Heart left ventricle (tissue), 16 donors: ENCODE measurements at regions of chr4 and their contacts with region 1.

Region 1: GRCh38 chr4:163332500-163333406 is at the start of gene NPY1R:
- DNase-seq: peak; percentile 43 to 70 (median 62)
- ATAC-seq: peak; percentile 80 to 96 (median 94)
- H3K4me3 ChIP-seq: peak within 1 kb of the TSS; percentile 27 to 73 (median 53)
- H3K27ac ChIP-seq: peak within 1 kb of the TSS in 2 of 12 donors; percentile 17 to 26
- H3K4me1 ChIP-seq: peaks cover 0 to 11% (median 0%) of the 10 kb centered on the region in 12 donors
- H3K27me3 ChIP-seq: peaks cover 4 to 45% (median 12%) of the 10 kb centered on the region in 9 donors
- CTCF ChIP-seq: peak; percentile 38 to 68 (median 62)
- POLR2A ChIP-seq: no peak
- total RNA-seq, gene NPY1R: 0.19 to 2.5 (median 0.56) TPM

Region 2: DNA sequence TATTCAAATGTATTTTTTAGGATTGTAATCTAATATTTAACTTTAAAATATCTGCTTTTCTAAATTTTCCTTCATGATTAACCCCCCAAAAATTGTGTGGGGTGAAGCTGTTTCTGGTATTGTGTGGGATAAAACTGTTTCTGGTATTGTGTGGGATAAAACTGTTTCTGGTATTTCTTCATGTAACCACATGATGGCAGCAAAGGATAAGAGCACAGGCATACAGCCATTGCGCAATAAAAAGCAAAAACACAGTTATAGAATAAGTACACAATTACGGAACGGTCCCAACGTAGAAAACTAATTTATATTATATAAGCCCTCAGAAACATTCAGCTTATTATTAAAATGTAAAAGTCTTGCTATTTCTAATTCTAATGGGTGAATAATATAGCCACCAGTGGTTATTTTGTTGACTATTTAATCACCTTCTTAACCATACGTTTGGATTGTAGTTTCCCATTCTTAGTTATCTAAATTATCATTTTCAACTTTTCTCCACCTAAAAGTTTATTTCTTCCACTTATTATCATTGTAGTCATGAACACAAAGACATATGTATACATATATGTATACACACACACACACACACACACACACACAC is 835.1 kb before region 1 on chr4:
- intact Hi-C with region 1: loop called (anchors 1 to 10 kb)
- DNase-seq: no peak
- ATAC-seq: peak; percentile 73 to 84 (median 78)
- H3K4me3 ChIP-seq: peak overlapping the region in 7 of 12 donors; percentile 18 to 36 (median 23)
- H3K27ac ChIP-seq: no peak overlapping the region
- H3K4me1 ChIP-seq: peaks cover 0 to 3% (median 0%) of the 10 kb centered on the region in 12 donors
- H3K27me3 ChIP-seq: peaks cover 0 to 2% (median 0%) of the 10 kb centered on the region in 9 donors
- CTCF ChIP-seq: peak; percentile 72 to 92 (median 82)
- POLR2A ChIP-seq: no peak

Region 3: GRCh38 chr4:162645381-162645780 is 687.4 kb before region 1 on chr4:
- intact Hi-C with region 1: loop called in 6 of 10 experiments (anchors 5 to 10 kb)
- DNase-seq: no peak
- ATAC-seq: peak in 2 of 4 donors; percentile 50 to 59
- H3K4me3 ChIP-seq: no peak overlapping the region
- H3K27ac ChIP-seq: no peak overlapping the region
- H3K4me1 ChIP-seq: no peaks in the 10 kb centered on the region
- H3K27me3 ChIP-seq: no peaks in the 10 kb centered on the region
- CTCF ChIP-seq: peak in 11 of 12 donors; percentile 26 to 60 (median 49)
- POLR2A ChIP-seq: no peak

Region 4: GRCh38 chr4:163111593-163111992 is 221.2 kb before region 1 on chr4:
- intact Hi-C with region 1: loop called in 1 of 10 experiments (anchors 10 kb)
- DNase-seq: no peak
- ATAC-seq: no peak
- H3K4me3 ChIP-seq: no peak overlapping the region
- H3K27ac ChIP-seq: no peak overlapping the region
- H3K4me1 ChIP-seq: peaks cover 0 to 8% (median 0%) of the 10 kb centered on the region in 12 donors
- H3K27me3 ChIP-seq: no peaks in the 10 kb centered on the region
- CTCF ChIP-seq: peak in 3 of 12 donors; percentile 9 to 21 (median 9)
- POLR2A ChIP-seq: no peak

Region 5: GRCh38 chr4:163166041-163166579 is 166.6 kb before region 1 on chr4:
- intact Hi-C with region 1: loop called in 1 of 10 experiments (anchors 5 kb)
- DNase-seq: peak; percentile 28 to 73 (median 45)
- ATAC-seq: peak in 3 of 4 donors; percentile 67 to 80 (median 75)
- H3K4me3 ChIP-seq: peak overlapping the region; percentile 71 to 94 (median 89)
- H3K27ac ChIP-seq: peak overlapping the region; percentile 59 to 94 (median 86)
- H3K4me1 ChIP-seq: peaks cover 0 to 33% (median 19%) of the 10 kb centered on the region in 12 donors
- H3K27me3 ChIP-seq: no peaks in the 10 kb centered on the region
- CTCF ChIP-seq: no peak
- POLR2A ChIP-seq: no peak

Region 6: GRCh38 chr4:163380703-163381102 is 48.0 kb after region 1 on chr4:
- intact Hi-C with region 1: no loop called
- DNase-seq: no peak
- ATAC-seq: no peak
- H3K4me3 ChIP-seq: no peak overlapping the region
- H3K27ac ChIP-seq: no peak overlapping the region
- H3K4me1 ChIP-seq: no peaks in the 10 kb centered on the region
- H3K27me3 ChIP-seq: no peaks in the 10 kb centered on the region
- CTCF ChIP-seq: no peak
- POLR2A ChIP-seq: no peak